MCF 10A (cell line): ENCODE measurements at regions of chr1 and their contacts with region 1.

Region 1: DNA sequence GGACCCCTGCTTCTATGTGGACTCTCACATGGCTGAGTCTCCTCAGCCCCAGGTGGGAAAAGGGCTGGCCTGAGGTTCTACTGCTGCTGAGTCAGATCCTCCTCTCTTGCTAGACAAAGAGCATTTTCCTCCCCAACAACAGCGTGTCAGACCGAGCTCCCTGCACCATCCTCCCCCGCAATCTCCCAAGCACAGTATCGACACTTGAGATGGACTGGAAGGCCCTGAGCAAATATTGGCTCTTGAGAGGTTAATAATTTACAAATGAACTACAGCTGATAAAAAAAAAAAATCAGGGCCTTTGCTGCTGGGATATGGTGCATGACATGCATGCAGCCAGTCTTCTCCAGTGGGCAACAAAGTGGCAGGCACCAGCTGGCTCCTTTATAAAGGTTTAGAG is 55.5 kb upstream of the CAMK1G start:
- DNase-seq: peak; percentile 36
- H3K4me3 Mint-ChIP-seq: no peak overlapping the region
- H3K27ac Mint-ChIP-seq: peak overlapping the region; percentile 60
- H3K4me1 Mint-ChIP-seq: peaks cover 64% of the 10 kb centered on the region
- H3K27me3 Mint-ChIP-seq: no peaks in the 10 kb centered on the region
- CTCF ChIP-seq: no peak

Region 2: GRCh38 chr1:209363112-209363511 is 164.9 kb before region 1 on chr1:
- CTCF ChIA-PET with region 1: interaction called, 4 read pairs
- POLR2A ChIA-PET with region 1: interaction called, 20 read pairs
- intact Hi-C with region 1: no loop called
- DNase-seq: no peak
- H3K4me3 Mint-ChIP-seq: no peak overlapping the region
- H3K27ac Mint-ChIP-seq: peak overlapping the region; percentile 88
- H3K4me1 Mint-ChIP-seq: peaks cover 60% of the 10 kb centered on the region
- H3K27me3 Mint-ChIP-seq: no peaks in the 10 kb centered on the region
- CTCF ChIP-seq: no peak

Region 3: GRCh38 chr1:209633335-209633997 is 105.5 kb after region 1 on chr1:
- CTCF ChIA-PET with region 1: no interaction called
- POLR2A ChIA-PET with region 1: no interaction called
- intact Hi-C with region 1: no loop called
- DNase-seq: no peak
- H3K4me3 Mint-ChIP-seq: no peak overlapping the region
- H3K27ac Mint-ChIP-seq: peak overlapping the region; percentile 83
- H3K4me1 Mint-ChIP-seq: peaks cover 47% of the 10 kb centered on the region
- H3K27me3 Mint-ChIP-seq: no peaks in the 10 kb centered on the region
- CTCF ChIP-seq: no peak